GM12878 (cell line): ENCODE measurements at regions of chr14 and their contacts with region 1.

Region 1: DNA sequence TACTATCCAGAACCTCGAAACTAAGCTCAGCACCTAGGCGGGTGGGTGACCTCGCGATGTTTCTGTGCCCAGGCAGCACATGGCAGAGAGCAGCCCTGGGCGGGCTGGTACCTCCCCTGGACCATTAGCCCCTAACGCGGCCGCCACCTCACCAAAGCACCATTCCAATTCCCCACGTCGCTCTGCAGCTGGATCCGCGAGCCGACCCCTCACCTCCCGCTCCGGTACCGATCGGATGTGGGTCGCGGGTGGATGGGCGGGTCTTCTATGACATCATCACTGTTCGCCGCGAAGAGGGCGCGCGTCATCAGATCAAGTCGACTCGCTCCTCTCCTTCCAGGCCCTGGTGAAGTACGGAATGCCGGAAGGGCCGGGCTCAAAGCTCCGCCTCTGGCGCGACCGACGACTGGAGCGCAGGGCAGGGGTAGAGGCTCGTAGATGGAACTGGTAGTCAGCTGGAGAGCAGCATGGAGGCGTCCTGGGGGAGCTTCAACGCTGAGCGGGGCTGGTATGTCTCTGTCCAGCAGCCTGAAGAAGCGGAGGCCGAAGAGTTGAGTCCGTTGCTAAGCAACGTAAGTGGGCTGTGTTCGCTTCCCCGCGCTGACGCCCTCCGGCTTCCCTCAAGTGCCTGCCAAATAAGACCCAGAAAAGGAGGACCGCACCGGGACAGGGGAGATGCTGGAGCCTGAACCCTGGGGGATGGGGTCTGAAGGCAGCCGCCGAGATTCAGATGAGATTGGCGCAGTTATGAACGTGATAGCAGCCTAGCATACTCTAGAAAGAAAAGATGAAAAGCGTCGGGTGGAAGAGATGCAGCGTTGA is at the starts of genes SLC38A6 and TRMT5:
- DNase-seq: peak; percentile 76
- ATAC-seq: peak; percentile 87
- H3K4me3 ChIP-seq: peak within 1 kb of the TSS; percentile 81
- H3K27ac ChIP-seq: peak within 1 kb of the TSS; percentile 81
- H3K4me1 ChIP-seq: 0 out of 2 replicates have a peak, but pooled peaks cover 3% of the 10 kb centered on the region
- H3K27me3 ChIP-seq: no peaks in the 10 kb centered on the region
- CTCF ChIP-seq: no peak
- EP300 ChIP-seq: peak; percentile 9 to 17; a peak in 1 of 4 replicates
- POLR2A ChIP-seq: peak; percentile 94
- RAD21 ChIP-seq: no peak
- polyA plus RNA-seq, gene SLC38A6: 2.9 TPM
- polyA plus RNA-seq, gene TRMT5: 6.6 to 13.1 TPM

Region 2: DNA sequence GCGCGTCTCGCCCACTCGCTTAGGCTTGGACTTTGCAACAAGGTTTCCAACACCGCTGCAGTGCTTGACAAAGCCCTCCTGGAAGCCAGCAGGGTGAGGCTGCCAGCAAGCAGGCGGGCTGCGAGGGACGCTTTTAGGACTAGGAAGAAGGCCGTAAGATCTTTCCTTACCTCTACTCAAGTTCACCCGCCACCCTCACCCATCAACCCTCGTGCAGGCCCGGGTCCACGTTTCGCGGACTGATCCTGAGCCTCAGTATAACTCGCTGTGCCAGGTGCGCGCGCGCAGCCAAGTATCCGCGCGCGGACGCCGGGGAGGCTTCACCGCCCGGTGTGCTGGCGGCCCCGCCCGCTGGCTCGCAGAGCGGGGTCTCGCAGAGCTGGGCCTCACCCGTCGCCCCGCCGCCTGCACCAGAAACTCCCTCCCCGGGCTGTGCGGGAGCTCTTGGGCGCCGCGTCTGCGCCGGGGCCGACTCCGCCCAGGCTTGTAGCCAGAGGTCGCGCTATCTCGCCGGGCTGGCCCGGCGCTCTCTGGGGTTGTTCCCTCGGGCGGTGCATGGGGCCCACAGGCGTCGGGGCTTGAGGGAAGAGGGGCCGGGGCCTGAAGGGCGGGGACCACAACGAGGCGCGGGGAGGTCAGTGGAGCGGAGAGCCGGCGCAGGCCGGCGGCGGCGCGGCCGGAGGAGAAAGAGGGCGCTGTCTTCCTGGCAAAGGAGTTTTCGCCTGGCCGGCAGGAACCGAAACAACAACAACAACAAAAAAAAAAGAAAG is 324.2 kb before region 1 on chr14:
- CTCF ChIA-PET with region 1: interaction called, 4 read pairs
- POLR2A ChIA-PET with region 1: no interaction called
- RAD21 ChIA-PET with region 1: interaction called, 5 read pairs
- SMC1A ChIA-PET with region 1: interaction called, 3 read pairs
- in situ Hi-C with region 1: no loop called
- intact Hi-C with region 1: loop called (anchors 5 kb)
- DNase-seq: peak; percentile 31
- ATAC-seq: peak; percentile 94
- H3K4me3 ChIP-seq: peak overlapping the region; percentile 85
- H3K27ac ChIP-seq: no peak overlapping the region
- H3K4me1 ChIP-seq: peaks cover 9% of the 10 kb centered on the region
- H3K27me3 ChIP-seq: peaks cover 10 to 25% of the 10 kb centered on the region in 2 experiments
- CTCF ChIP-seq: peak; percentile 51 to 75 (median 58); a peak in 5 of 6 replicates
- EP300 ChIP-seq: no peak
- POLR2A ChIP-seq: no peak
- RAD21 ChIP-seq: peak; percentile 57

Region 3: GRCh38 chr14:60968099-60968498 is 12.9 kb before region 1 on chr14:
- CTCF ChIA-PET with region 1: no interaction called
- POLR2A ChIA-PET with region 1: no interaction called
- RAD21 ChIA-PET with region 1: no interaction called
- SMC1A ChIA-PET with region 1: interaction called, 14 read pairs
- in situ Hi-C with region 1: no loop called
- intact Hi-C with region 1: no loop called
- DNase-seq: no peak
- ATAC-seq: no peak
- H3K4me3 ChIP-seq: no peak overlapping the region
- H3K27ac ChIP-seq: no peak overlapping the region
- H3K4me1 ChIP-seq: no peaks in the 10 kb centered on the region
- H3K27me3 ChIP-seq: no peaks in the 10 kb centered on the region
- CTCF ChIP-seq: no peak
- EP300 ChIP-seq: no peak
- POLR2A ChIP-seq: no peak
- RAD21 ChIP-seq: no peak

Region 4: GRCh38 chr14:61051051-61051450 is 70.0 kb after region 1 on chr14:
- CTCF ChIA-PET with region 1: no interaction called
- POLR2A ChIA-PET with region 1: no interaction called
- RAD21 ChIA-PET with region 1: no interaction called
- SMC1A ChIA-PET with region 1: no interaction called
- in situ Hi-C with region 1: no loop called
- intact Hi-C with region 1: no loop called
- DNase-seq: no peak
- ATAC-seq: no peak
- H3K4me3 ChIP-seq: no peak overlapping the region
- H3K27ac ChIP-seq: no peak overlapping the region
- H3K4me1 ChIP-seq: no peaks in the 10 kb centered on the region
- H3K27me3 ChIP-seq: no peaks in the 10 kb centered on the region
- CTCF ChIP-seq: no peak
- EP300 ChIP-seq: no peak
- POLR2A ChIP-seq: no peak
- RAD21 ChIP-seq: no peak

Region 5: GRCh38 chr14:61188978-61189808 is 208.2 kb after region 1 on chr14:
- CTCF ChIA-PET with region 1: no interaction called
- POLR2A ChIA-PET with region 1: no interaction called
- RAD21 ChIA-PET with region 1: no interaction called
- SMC1A ChIA-PET with region 1: no interaction called
- in situ Hi-C with region 1: no loop called
- intact Hi-C with region 1: loop called (anchors 5 kb)
- DNase-seq: no peak
- ATAC-seq: peak; percentile 89
- H3K4me3 ChIP-seq: peak overlapping the region; percentile 41; the same call in 1 of the 2 replicates
- H3K27ac ChIP-seq: no peak overlapping the region
- H3K4me1 ChIP-seq: no peaks in the 10 kb centered on the region
- H3K27me3 ChIP-seq: peaks cover 3% of the 10 kb centered on the region in 2 experiments
- CTCF ChIP-seq: peak; percentile 38 to 67 (median 56)
- EP300 ChIP-seq: no peak
- POLR2A ChIP-seq: no peak
- RAD21 ChIP-seq: peak; percentile 40